PC-9 (cell line): ENCODE measurements at regions of chr12 and their contacts with region 1.

Region 1: DNA sequence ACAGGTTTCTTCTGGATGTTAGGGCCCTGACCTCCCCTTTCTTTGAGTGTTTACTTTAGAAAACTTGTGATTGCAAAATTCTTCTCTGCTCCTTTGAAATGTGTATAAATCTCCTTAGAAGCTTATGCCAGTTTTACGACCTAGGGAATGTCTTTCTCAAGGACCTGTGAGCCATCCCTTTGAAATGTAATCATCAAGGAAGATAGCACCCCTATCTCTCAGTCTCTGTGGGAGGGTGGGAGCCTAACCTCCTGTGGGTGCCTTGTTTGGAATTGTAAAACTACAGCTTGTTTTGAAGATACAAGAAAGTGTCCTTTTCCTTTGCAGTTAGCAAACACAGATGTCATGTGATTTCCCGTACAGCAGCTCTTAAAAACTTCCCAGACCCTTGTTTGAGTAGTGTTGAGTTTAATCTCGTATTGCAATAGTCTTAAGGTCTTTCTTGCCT is 3.3 kb downstream of the OR10AD1 start:
- DNase-seq: peak in 1 of 2 experiments; percentile 50
- H3K4me3 ChIP-seq: no peak overlapping the region
- H3K27ac ChIP-seq: peak overlapping the region; percentile 6; the same call in 1 of the 2 replicates
- H3K4me1 ChIP-seq: peaks cover 12% of the 10 kb centered on the region; the same call in 1 of the 2 replicates
- H3K27me3 ChIP-seq: peaks cover 5% of the 10 kb centered on the region; the same call in 1 of the 2 replicates
- CTCF ChIP-seq: no peak

Region 2: DNA sequence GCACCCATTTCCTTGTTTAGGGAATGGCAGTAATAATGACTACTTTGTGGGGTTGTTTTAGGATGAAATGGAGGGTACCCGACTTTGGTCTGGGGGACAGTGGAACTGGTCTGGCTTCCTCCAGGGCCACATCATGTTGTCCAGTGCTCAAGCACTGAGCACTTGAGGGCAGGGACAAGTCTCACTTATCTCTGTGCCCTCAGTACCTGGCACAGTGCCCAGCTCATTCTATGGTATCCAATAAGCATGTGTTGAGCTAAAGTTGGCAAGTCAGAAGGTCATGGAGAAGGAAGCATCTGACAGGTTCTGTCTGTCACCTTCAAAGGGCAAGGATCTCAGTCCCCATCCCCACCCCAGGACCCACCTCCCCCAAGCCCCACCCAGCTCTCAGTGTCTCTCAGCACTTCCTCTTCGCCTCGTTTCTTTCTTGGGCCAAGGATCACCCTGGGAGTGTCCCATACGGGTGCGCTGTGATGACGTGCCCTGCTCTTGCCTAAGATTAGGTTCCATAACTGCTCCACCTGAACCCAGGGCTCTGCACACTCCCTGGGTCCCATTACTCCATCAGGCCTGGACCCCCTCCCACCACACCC is 260.7 kb before region 1 on chr12:
- CTCF ChIA-PET with region 1: no interaction called
- POLR2A ChIA-PET with region 1: interaction called, 11 read pairs
- intact Hi-C with region 1: no loop called
- DNase-seq: no peak
- H3K4me3 ChIP-seq: no peak overlapping the region
- H3K27ac ChIP-seq: no peak overlapping the region
- H3K4me1 ChIP-seq: peaks cover 29% of the 10 kb centered on the region
- H3K27me3 ChIP-seq: no peaks in the 10 kb centered on the region
- CTCF ChIP-seq: no peak

Region 3: DNA sequence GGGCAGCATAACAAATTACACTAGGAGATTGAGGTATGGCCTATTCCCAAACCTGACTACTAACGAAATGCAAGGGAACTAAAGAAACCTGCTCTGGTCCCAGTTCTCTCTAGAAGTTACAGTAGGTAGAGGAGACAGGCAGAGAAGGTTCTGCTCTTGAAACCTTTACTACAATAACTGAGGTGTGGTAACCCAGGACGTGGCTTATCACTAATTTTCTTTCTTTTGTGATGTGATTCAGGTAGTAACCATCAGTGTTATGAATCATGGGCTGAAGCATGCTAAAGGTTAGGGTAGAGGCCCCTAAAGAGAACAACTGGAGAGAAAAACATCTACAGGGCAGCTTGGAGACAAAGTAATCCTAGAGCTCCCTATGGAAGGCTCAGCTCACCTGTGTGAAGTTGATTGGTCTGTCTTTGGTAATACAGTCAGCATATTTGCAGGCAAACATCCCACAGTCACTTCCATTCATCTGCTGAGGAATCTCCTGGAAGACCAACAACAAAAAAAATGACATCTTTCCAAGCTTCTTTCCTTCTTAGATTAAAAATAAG is 153.8 kb before region 1 on chr12:
- CTCF ChIA-PET with region 1: no interaction called
- POLR2A ChIA-PET with region 1: no interaction called
- intact Hi-C with region 1: no loop called
- DNase-seq: no peak
- H3K4me3 ChIP-seq: no peak overlapping the region
- H3K27ac ChIP-seq: 0 out of 2 replicates have a peak overlapping the region, but pooled peaks have one; percentile 13
- H3K4me1 ChIP-seq: peaks cover 29% of the 10 kb centered on the region
- H3K27me3 ChIP-seq: no peaks in the 10 kb centered on the region
- CTCF ChIP-seq: no peak

Region 4: DNA sequence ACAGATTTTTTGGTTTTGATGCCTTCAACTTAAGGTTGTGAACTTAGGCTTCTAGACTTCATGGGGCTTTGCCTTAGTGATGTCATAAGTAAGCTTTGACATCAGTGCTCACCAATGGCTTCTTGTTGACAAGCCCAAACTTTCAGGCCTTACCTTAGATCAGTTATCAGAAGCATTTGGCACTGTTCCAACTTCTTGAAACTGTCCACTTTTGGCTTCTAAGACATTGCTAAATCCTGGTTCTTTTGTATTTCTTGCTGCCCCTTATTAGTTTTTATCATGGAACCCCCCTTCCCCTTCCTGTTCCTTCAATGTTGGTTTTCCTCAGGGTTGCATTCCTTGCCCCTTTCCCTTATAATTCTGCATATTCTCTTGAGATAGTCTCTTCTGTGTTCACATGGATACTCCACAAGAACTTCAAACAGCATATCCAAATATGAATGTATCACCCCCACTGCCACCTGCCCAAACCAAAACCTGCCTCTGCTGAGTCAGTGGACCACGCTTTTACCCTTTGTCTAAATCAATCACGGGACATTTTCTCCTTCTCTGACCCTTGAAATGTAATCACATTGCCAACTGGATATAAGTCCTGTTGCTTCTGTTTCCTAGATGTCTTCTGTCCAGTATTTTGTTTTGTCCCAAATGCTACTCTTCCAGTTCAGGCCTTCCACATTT is 72.7 kb before region 1 on chr12:
- CTCF ChIA-PET with region 1: no interaction called
- POLR2A ChIA-PET with region 1: no interaction called
- intact Hi-C with region 1: no loop called
- DNase-seq: no peak
- H3K4me3 ChIP-seq: no peak overlapping the region
- H3K27ac ChIP-seq: no peak overlapping the region
- H3K4me1 ChIP-seq: no peaks in the 10 kb centered on the region
- H3K27me3 ChIP-seq: no peaks in the 10 kb centered on the region
- CTCF ChIP-seq: no peak

Region 5: GRCh38 chr12:48351022-48351708 is 151.4 kb after region 1 on chr12:
- CTCF ChIA-PET with region 1: no interaction called
- POLR2A ChIA-PET with region 1: no interaction called
- intact Hi-C with region 1: no loop called
- DNase-seq: peak; percentile 60 to 62
- H3K4me3 ChIP-seq: peak overlapping the region; percentile 98
- H3K27ac ChIP-seq: peak overlapping the region; percentile 39; the same call in 1 of the 2 replicates
- H3K4me1 ChIP-seq: peaks cover 7% of the 10 kb centered on the region
- H3K27me3 ChIP-seq: no peaks in the 10 kb centered on the region
- CTCF ChIP-seq: no peak

Region 6: DNA sequence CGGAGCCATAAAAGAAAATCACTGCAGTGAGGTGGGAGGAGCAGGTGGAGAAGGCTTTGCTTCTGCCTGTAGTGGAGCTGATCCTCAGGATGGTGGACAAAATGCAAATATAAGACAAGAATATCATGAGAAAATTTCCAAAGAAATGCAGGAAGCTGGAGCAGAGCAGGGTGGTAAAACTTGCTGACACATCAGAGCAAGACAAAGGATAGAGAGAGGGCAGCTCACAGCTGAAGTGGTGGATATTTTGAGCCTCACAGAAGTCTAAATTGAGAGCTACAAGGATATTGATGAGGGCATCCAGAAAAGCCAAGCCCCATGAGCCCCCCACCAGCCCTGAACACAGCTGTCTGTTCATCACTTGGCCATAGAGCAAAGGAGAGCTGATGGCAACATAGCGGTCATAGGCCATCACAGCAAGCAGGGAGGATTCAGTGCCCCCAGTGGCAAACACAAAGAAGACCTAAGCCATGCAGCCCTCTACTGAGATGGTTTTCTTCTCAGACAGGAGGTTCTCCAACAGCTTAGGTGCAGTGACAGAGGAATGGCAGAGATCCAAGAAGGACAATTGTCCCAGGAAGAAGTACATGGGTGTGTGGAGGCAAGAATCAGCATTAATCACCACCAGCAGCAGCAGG is 242.5 kb after region 1 on chr12:
- CTCF ChIA-PET with region 1: no interaction called
- POLR2A ChIA-PET with region 1: no interaction called
- intact Hi-C with region 1: no loop called
- DNase-seq: no peak
- H3K4me3 ChIP-seq: no peak overlapping the region
- H3K27ac ChIP-seq: no peak overlapping the region
- H3K4me1 ChIP-seq: no peaks in the 10 kb centered on the region
- H3K27me3 ChIP-seq: peaks cover 14% of the 10 kb centered on the region
- CTCF ChIP-seq: 0 out of 2 replicates have a peak, but pooled peaks have one; percentile 19